ENCODE measurements at regions of chr5 and their contacts with region 1.

Region 1: DNA sequence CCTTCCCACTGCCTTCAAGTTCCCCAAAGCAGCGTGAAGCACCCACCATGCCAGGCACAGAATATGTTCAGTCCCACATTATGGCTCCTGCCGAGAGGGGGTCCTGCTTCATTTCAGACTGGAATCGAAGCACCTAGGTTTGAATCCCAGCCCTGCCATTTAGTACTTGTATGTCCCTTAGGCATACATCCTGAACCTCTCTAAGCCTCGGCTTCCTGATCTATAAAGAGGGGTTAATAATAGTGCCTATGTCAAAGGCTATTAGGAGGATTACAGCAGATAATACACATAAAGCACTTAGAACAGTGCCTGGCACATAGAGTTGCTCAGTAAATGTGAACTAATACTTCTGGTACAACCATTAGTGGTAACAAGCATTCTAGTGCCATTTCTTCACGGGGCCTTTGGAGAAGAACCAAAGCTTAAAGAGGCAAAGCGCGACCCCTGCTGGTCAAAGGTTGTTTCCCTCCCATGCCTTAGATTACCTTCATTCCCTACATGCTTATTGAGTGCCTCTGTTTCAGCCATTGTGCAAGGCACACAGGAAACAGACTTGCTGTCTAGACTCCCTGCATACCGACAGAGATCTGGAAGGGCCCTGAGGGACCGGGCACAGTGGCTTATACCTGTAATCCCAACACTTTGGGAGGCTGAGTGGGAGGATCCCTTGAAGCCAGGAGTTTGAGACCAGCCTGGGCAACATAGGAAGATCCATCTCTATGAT is 98.2 kb downstream of the PPARGC1B start:
- DNase-seq: peak; percentile 88 to 93
- ATAC-seq: peak; percentile 84 to 90 (median 88)
- H3K4me3 ChIP-seq: no peak overlapping the region
- H3K27ac ChIP-seq: peak overlapping the region; percentile 80
- H3K4me1 ChIP-seq: peaks cover 60% of the 10 kb centered on the region
- H3K27me3 ChIP-seq: no peaks in the 10 kb centered on the region
- CTCF ChIP-seq: peak; percentile 93

Region 2: DNA sequence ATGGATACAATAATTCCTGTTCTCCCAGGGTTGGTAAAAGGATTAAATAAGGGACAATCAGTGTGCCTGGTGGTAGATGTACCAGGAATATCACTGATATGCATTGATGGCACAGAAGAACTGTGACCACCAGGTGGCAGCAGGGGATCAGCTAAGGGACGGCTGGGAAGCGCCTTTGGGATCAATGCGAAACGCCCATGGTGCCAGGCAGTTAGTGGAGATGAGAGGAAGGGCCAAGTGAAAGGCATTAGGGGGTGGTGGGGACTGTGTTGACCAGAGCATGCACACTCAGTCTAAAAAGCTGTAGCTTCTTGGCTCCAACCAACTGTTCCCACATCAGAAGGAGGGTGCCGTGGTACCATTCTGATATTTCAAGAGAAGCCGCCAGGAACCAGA is 191.5 kb before region 1 on chr5:
- intact Hi-C with region 1: loop called (anchors 1 to 2 kb)
- DNase-seq: no peak
- ATAC-seq: peak; percentile 68 to 74 (median 73)
- H3K4me3 ChIP-seq: no peak overlapping the region
- H3K27ac ChIP-seq: no peak overlapping the region
- H3K4me1 ChIP-seq: peaks cover 29% of the 10 kb centered on the region
- H3K27me3 ChIP-seq: no peaks in the 10 kb centered on the region
- CTCF ChIP-seq: peak; percentile 85

Region 3: DNA sequence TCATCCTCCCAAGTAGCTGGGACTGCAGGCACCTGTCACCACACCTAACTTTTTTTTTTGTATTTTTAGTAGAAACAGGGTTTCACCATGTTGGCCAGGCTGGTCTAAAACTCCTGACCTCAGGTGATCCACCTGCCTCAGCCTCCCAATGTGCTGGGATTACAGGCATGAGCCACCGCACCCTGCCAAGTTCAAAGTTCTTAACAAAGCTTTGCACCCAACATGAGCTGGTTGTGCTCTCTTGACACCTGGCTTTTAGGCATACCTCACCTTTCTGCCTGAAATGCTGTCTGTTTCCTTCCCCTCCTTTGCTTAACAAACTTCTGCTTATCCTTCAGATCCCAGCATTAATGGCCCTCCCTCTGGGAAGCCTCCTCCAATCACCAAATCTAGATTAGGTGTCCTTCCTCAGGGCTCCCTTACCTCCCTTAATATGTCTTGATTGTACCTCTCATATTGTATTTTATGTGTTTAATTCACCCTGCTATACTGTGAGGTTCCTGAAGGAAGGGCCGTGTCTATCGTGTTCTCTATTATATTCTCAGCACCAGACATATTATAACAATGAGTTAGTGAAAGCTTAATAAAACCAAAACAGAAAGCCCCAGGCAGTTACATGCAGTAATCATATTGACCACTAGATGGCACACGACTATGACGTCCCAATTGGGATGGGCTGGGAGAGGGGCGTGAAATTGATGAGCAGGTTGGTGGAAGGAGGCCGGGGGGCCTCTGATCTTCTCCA is 161.1 kb before region 1 on chr5:
- intact Hi-C with region 1: loop called (anchors 2 kb)
- DNase-seq: no peak
- ATAC-seq: peak; percentile 54 to 72 (median 67)
- H3K4me3 ChIP-seq: no peak overlapping the region
- H3K27ac ChIP-seq: no peak overlapping the region
- H3K4me1 ChIP-seq: peaks cover 32% of the 10 kb centered on the region
- H3K27me3 ChIP-seq: no peaks in the 10 kb centered on the region
- CTCF ChIP-seq: peak; percentile 83

Region 4: GRCh38 chr5:149765932-149766331 is 62.4 kb before region 1 on chr5:
- intact Hi-C with region 1: loop called in 1 of 2 experiments (anchors 10 kb)
- DNase-seq: no peak
- ATAC-seq: no peak
- H3K4me3 ChIP-seq: no peak overlapping the region
- H3K27ac ChIP-seq: no peak overlapping the region
- H3K4me1 ChIP-seq: peaks cover 31% of the 10 kb centered on the region
- H3K27me3 ChIP-seq: no peaks in the 10 kb centered on the region
- CTCF ChIP-seq: peak; percentile 25

Region 5: GRCh38 chr5:149775785-149776184 is 52.5 kb before region 1 on chr5:
- intact Hi-C with region 1: loop called in 1 of 2 experiments (anchors 5 kb)
- DNase-seq: no peak
- ATAC-seq: no peak
- H3K4me3 ChIP-seq: no peak overlapping the region
- H3K27ac ChIP-seq: peak overlapping the region; percentile 50
- H3K4me1 ChIP-seq: peaks cover 72% of the 10 kb centered on the region
- H3K27me3 ChIP-seq: no peaks in the 10 kb centered on the region
- CTCF ChIP-seq: peak; percentile 24

Measured in psoas muscle (tissue), 8 donors.